Panc1 (cell line): ENCODE measurements at regions of chr13 and their contacts with region 1.

Region 1: DNA sequence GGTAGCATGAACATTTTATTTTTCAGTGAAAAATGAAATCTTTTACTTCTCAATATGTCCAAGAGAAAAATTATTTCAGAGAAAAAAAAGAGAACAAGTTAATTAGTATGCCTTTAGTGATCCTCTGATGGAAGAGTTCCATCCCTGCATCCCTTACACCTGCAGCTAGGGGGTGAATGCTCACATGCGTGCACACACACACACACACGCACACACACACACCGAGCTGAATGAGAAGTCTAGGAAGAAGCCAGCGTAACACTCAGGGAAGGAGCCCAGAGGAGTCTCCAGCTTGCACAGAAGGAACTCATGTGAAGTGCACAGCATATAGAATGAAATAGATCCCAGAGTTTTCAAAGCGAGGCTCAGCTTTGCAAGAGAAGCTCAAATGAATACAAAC is 510.5 kb downstream of the IRS2 start:
- DNase-seq: no peak
- ATAC-seq: no peak
- H3K4me3 ChIP-seq: no peak overlapping the region
- H3K27ac ChIP-seq: no peak overlapping the region
- H3K4me1 ChIP-seq: peaks cover 15% of the 10 kb centered on the region; the same call in 1 of the 2 replicates
- H3K27me3 ChIP-seq: no peaks in the 10 kb centered on the region
- CTCF ChIP-seq: peak; percentile 33

Region 2: GRCh38 chr13:108961542-108962125 is 314.2 kb before region 1 on chr13:
- CTCF ChIA-PET with region 1: no interaction called
- POLR2A ChIA-PET with region 1: no interaction called
- in situ Hi-C with region 1: no loop called
- intact Hi-C with region 1: loop called (anchors 10 kb)
- DNase-seq: peak; percentile 46
- ATAC-seq: peak; percentile 82
- H3K4me3 ChIP-seq: no peak overlapping the region
- H3K27ac ChIP-seq: no peak overlapping the region
- H3K4me1 ChIP-seq: no peaks in the 10 kb centered on the region
- H3K27me3 ChIP-seq: no peaks in the 10 kb centered on the region
- CTCF ChIP-seq: peak; percentile 63

Region 3: GRCh38 chr13:109145631-109146030 is 130.2 kb before region 1 on chr13:
- CTCF ChIA-PET with region 1: interaction called, 7 read pairs
- POLR2A ChIA-PET with region 1: no interaction called
- in situ Hi-C with region 1: no loop called
- intact Hi-C with region 1: loop called (anchors 5 kb)
- DNase-seq: peak; percentile 46
- ATAC-seq: peak; percentile 78
- H3K4me3 ChIP-seq: no peak overlapping the region
- H3K27ac ChIP-seq: peak overlapping the region; percentile 91
- H3K4me1 ChIP-seq: peaks cover 32% of the 10 kb centered on the region
- H3K27me3 ChIP-seq: no peaks in the 10 kb centered on the region
- CTCF ChIP-seq: peak; percentile 75

Region 4: GRCh38 chr13:109786457-109787134 is 510.7 kb after region 1 on chr13 and contains the start of gene IRS2:
- CTCF ChIA-PET with region 1: no interaction called
- POLR2A ChIA-PET with region 1: no interaction called
- in situ Hi-C with region 1: no loop called
- intact Hi-C with region 1: loop called (anchors 5 kb)
- DNase-seq: no peak
- ATAC-seq: peak; percentile 87
- H3K4me3 ChIP-seq: peak within 1 kb of the TSS; percentile 61 to 66
- H3K27ac ChIP-seq: peak within 1 kb of the TSS; percentile 44; the same call in 1 of the 2 replicates
- H3K4me1 ChIP-seq: no peaks in the 10 kb centered on the region; the same call in 1 of the 2 replicates
- H3K27me3 ChIP-seq: no peaks in the 10 kb centered on the region
- CTCF ChIP-seq: no peak
- total RNA-seq, gene IRS2: 5.9 TPM

Region 5: DNA sequence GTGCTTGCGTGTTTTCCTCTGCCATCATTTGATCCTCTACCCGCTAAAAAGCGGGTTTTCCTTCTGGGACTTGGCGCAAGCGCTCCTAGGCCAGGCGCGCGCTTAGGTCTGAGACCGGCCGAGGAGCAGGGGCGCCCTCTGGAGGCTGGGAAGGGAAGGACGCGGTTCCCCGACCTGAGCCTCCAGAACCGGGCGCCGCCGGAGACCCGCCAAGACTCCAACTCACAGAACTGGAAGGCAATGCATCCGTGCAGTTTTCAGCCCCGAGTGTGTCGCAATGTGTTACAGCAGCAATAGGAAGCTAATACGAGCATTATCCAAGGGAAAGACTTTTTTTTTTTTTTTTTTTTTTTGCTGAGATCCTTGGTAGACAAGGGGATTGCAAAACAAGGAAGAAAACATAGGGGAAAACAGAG is 840.2 kb after region 1 on chr13:
- CTCF ChIA-PET with region 1: no interaction called
- POLR2A ChIA-PET with region 1: no interaction called
- in situ Hi-C with region 1: no loop called
- intact Hi-C with region 1: loop called (anchors 10 kb)
- DNase-seq: no peak
- ATAC-seq: peak; percentile 89
- H3K4me3 ChIP-seq: no peak overlapping the region
- H3K27ac ChIP-seq: no peak overlapping the region
- H3K4me1 ChIP-seq: no peaks in the 10 kb centered on the region
- H3K27me3 ChIP-seq: peaks cover 5% of the 10 kb centered on the region
- CTCF ChIP-seq: peak; percentile 85